Activated naive CD4-positive, alpha-beta T cell treated with anti-CD3 and anti-CD28 coated beads for 36 hours (primary cell): ENCODE measurements at regions of chr22 and their contacts with region 1.

Region 1: DNA sequence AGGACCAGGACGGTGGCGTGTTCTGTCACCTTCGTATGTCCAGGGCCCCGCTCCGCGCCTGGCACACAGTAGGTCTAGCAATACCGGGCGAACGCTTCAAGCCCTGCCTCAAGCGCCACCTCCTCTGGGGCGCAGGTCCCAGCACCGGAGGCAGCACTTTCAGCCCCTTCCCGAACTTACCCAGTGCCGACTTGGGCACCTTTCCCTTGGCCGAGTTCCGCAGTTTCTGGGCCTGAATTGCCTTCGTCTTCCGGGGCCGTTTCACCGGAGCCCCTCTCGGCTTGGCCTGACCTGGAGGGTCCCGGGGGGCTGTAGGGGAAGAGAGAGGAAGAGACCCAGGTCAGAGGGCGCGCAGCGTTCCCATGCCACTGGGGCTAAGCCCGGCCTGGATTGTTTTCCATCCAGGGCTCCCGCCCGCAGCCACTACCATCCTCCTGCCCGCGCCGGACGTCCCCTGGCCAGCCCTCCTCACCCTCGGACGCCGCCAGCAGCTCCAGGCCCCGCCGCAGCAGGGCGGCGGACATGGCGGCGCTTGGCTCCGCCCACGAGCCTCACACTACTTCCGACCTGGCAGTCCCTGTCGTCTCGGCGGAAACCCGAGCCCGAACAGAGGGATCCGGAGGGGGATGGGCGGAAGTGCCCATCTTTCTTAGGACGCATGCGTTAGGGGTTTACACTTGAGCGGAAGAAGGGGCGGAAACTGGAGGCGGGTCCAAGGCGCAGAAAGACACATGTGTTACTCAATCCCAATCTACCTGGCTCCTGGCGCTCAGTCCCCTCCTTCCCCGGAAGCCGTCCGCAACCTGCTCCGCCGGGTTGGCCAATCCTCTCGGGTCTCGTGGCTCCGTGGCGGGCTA is at the start of gene RPS19BP1:
- DNase-seq: peak; percentile 100
- H3K4me3 Mint-ChIP-seq: peak within 1 kb of the TSS; percentile 94
- H3K27ac Mint-ChIP-seq: peak within 1 kb of the TSS; percentile 91
- H3K4me1 Mint-ChIP-seq: peaks cover 49% of the 10 kb centered on the region
- H3K27me3 Mint-ChIP-seq: no peaks in the 10 kb centered on the region
- total RNA-seq, gene RPS19BP1: 52.0 to 56.2 TPM

Region 2: GRCh38 chr22:39170825-39171622 is 361.4 kb before region 1 on chr22:
- CTCF ChIA-PET with region 1: interaction called, 5 read pairs
- intact Hi-C with region 1: loop called (anchors 1 kb)
- DNase-seq: peak; percentile 89
- H3K4me3 Mint-ChIP-seq: peak overlapping the region; percentile 60
- H3K27ac Mint-ChIP-seq: peak overlapping the region; percentile 57
- H3K4me1 Mint-ChIP-seq: peaks cover 37% of the 10 kb centered on the region
- H3K27me3 Mint-ChIP-seq: no peaks in the 10 kb centered on the region

Region 3: GRCh38 chr22:39395936-39396796 is 136.3 kb before region 1 on chr22:
- CTCF ChIA-PET with region 1: interaction called, 14 read pairs
- intact Hi-C with region 1: loop called (anchors 1 kb)
- DNase-seq: no peak
- H3K4me3 Mint-ChIP-seq: no peak overlapping the region
- H3K27ac Mint-ChIP-seq: no peak overlapping the region
- H3K4me1 Mint-ChIP-seq: peaks cover 7% of the 10 kb centered on the region
- H3K27me3 Mint-ChIP-seq: no peaks in the 10 kb centered on the region

Region 4: GRCh38 chr22:39502109-39502788 is 30.2 kb before region 1 on chr22 and contains the start of gene MIEF1:
- CTCF ChIA-PET with region 1: interaction called, 208 read pairs
- intact Hi-C with region 1: loop called (anchors 2 kb)
- DNase-seq: peak; percentile 96
- H3K4me3 Mint-ChIP-seq: peak within 1 kb of the TSS; percentile 96
- H3K27ac Mint-ChIP-seq: peak within 1 kb of the TSS; percentile 91
- H3K4me1 Mint-ChIP-seq: peaks cover 34% of the 10 kb centered on the region
- H3K27me3 Mint-ChIP-seq: no peaks in the 10 kb centered on the region
- total RNA-seq, gene MIEF1: 33.3 to 35.1 TPM

Region 5: GRCh38 chr22:39543095-39543494 is 10.7 kb after region 1 on chr22:
- CTCF ChIA-PET with region 1: interaction called, 14 read pairs
- intact Hi-C with region 1: no loop called
- DNase-seq: peak; percentile 59
- H3K4me3 Mint-ChIP-seq: no peak overlapping the region
- H3K27ac Mint-ChIP-seq: no peak overlapping the region
- H3K4me1 Mint-ChIP-seq: peaks cover 10% of the 10 kb centered on the region
- H3K27me3 Mint-ChIP-seq: peaks cover 25% of the 10 kb centered on the region

Region 6: DNA sequence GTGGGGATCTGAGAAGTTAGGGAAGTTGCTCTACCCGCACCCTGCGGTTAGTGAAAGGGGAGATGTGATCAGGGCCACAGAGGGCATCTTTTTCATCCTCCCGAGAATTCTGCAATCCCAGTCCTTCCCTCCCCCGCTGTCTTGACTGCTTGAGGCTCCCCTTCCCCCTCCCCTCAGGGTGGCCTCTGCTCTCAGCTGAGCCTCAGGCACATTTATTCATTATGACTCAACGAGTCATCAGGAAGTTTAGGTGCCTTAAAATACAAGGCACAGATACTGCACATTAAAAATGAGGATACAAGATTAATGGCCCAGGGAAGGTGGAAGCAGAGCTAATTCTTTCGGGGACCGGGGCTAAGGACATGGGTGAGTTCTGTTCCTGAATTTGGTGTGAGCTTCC is 142.1 kb after region 1 on chr22:
- CTCF ChIA-PET with region 1: no interaction called
- intact Hi-C with region 1: no loop called
- DNase-seq: no peak
- H3K4me3 Mint-ChIP-seq: no peak overlapping the region
- H3K27ac Mint-ChIP-seq: no peak overlapping the region
- H3K4me1 Mint-ChIP-seq: no peaks in the 10 kb centered on the region
- H3K27me3 Mint-ChIP-seq: no peaks in the 10 kb centered on the region

Region 7: DNA sequence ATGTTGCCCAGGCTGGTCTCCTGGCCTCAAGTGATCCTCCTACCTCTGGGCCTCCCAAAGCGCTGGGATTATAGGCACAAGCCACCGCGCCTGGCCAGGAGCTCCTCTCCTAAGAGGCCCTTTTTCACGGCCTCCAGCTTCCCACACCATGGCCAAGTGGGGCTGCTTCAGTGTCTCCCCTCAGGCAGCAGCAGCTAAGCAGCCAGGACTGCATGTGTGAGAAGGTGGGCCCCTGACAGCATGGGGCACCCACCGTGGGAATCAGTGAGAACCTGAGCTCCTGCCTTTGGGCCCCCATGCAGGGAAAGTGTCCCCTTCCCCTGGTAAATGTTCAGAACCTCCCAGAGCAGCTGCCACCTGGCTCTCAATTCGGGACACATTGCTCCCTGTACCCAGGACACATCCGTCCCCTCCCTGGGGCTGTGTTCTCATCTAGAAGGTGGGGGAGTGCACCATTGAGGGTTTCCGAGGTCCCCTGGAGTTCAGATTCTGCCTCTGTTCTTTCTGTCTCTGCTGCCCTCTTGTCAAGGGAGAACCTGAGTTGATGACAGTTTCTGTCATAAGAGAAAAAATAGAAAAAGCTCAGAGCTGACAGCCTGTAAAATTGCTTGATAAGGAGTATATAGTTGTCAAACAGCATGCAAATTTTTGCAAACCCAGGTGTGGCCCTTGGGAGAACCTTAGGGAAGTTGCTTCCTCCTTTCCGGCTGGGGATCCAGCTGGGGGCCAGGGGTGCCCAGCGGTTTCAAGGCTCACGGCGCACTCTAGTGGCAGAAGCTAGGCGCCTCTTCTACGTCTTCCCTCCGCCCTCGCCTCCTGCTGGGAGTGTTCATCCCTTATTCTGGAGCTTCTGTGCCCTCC is 492.0 kb after region 1 on chr22:
- CTCF ChIA-PET with region 1: interaction called, 67 read pairs
- intact Hi-C with region 1: loop called (anchors 1 kb)
- DNase-seq: peak; percentile 75
- H3K4me3 Mint-ChIP-seq: no peak overlapping the region
- H3K27ac Mint-ChIP-seq: no peak overlapping the region
- H3K4me1 Mint-ChIP-seq: no peaks in the 10 kb centered on the region
- H3K27me3 Mint-ChIP-seq: no peaks in the 10 kb centered on the region

Region 8: DNA sequence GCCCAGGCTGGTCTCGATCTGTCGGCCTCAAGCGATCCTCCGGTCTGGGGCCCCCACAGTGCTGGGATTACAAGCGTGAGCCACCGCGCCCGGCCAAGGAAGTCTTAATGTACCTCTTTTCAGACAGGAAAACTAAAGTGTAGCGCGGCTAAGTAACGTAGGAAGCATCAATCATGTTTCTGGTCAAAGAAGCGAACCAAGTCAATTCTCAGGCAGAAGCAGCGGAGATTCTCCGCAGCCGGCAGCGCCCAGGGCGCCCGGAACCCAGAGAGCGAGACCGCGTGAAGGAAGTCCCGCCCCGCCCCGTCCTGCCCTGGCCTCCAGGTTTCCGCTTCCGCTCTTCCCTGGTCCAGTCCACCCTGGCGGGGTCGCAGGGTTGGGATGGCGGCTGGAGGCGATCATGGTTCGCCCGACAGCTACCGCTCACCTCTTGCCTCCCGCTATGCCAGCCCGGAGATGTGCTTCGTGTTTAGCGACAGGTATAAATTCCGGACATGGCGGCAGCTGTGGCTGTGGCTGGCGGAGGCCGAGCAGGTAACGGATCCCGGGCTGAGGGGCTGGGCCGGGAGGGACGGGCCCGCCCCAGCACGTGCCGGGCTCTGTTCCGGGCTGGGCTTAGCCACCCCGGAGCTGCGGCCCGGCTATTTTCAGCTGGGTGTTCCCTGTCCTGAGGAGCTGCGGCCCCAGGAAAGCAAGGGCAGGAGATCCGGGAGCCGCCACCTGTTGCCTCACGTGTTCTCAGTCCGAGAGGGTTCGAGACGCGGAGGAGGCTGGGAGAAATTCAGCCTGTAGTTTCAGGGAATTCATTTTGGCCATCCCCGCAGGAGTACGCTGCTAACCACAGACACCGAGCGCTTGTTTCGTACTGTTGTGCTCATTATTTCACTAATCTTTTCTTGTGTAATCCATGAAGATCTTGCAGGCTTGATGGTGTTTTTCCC is 814.0 kb after region 1 on chr22 and contains the start of gene ADSL:
- CTCF ChIA-PET with region 1: interaction called, 10 read pairs
- intact Hi-C with region 1: loop called (anchors 5 kb)
- DNase-seq: peak; percentile 91
- H3K4me3 Mint-ChIP-seq: peak within 1 kb of the TSS; percentile 94
- H3K27ac Mint-ChIP-seq: peak within 1 kb of the TSS; percentile 96
- H3K4me1 Mint-ChIP-seq: peaks cover 46% of the 10 kb centered on the region
- H3K27me3 Mint-ChIP-seq: no peaks in the 10 kb centered on the region
- total RNA-seq, gene ADSL: 125 to 129 TPM